Heart left ventricle (tissue), 16 donors: ENCODE measurements at regions of chr5 and their contacts with region 1.

Region 1: DNA sequence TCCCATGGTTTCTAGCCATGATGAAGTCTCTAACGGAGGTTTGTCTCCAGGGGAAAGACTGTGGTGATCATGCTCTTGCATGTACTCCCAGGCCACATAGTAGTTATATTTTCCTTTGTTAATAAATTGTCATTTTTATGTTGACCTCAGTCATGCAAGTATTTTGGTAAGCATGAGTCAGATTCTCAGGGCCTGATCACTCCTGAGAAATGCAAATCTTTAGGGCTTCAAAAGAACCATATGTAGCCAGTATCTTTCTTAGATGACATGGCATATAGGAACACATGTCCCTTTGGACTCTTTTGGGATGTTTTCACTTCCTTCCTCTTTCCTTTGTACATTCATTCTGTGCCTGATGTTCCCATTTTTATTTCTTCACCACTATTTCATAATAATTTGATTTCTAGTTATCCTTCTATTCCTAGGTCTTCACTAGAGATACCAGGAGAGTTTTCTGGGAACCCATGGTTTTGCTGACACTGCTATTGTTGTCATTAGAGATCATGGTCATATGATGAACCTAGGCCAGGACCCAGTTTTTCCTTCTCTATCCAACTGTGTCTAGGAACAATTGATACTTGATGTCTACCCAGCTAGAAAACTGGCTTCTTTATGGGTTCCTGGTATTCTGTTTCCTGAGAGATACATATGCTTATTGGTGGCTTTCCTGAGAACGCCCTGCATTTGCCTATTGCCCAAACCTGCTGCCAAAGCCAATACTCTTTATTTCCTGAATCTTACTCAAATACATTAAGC is 248.1 kb upstream of the NREP start:
- DNase-seq: no peak
- ATAC-seq: peak in 1 of 4 donors; percentile 20
- H3K4me3 ChIP-seq: no peak overlapping the region
- H3K27ac ChIP-seq: no peak overlapping the region
- H3K4me1 ChIP-seq: peaks cover 0 to 8% (median 0%) of the 10 kb centered on the region in 12 donors
- H3K27me3 ChIP-seq: no peaks in the 10 kb centered on the region
- CTCF ChIP-seq: no peak
- POLR2A ChIP-seq: no peak

Region 2: GRCh38 chr5:111954516-111955395 is 50.3 kb before region 1 on chr5:
- intact Hi-C with region 1: loop called in 1 of 10 experiments (anchors 2 kb)
- DNase-seq: no peak
- ATAC-seq: no peak
- H3K4me3 ChIP-seq: no peak overlapping the region
- H3K27ac ChIP-seq: no peak overlapping the region
- H3K4me1 ChIP-seq: peaks cover 0 to 7% (median 0%) of the 10 kb centered on the region in 12 donors
- H3K27me3 ChIP-seq: no peaks in the 10 kb centered on the region
- CTCF ChIP-seq: no peak
- POLR2A ChIP-seq: no peak

Region 3: GRCh38 chr5:112136773-112137172 is 131.7 kb after region 1 on chr5:
- intact Hi-C with region 1: loop called in 4 of 10 experiments (anchors 5 to 10 kb)
- DNase-seq: peak in 3 of 5 donors; percentile 25 to 36 (median 35)
- ATAC-seq: peak in 2 of 4 donors; percentile 45 to 77
- H3K4me3 ChIP-seq: no peak overlapping the region
- H3K27ac ChIP-seq: no peak overlapping the region
- H3K4me1 ChIP-seq: peaks cover 0 to 1% (median 0%) of the 10 kb centered on the region in 12 donors
- H3K27me3 ChIP-seq: no peaks in the 10 kb centered on the region
- CTCF ChIP-seq: no peak
- POLR2A ChIP-seq: no peak